ENCODE measurements at regions of chr7 and their contacts with region 1.

Region 1: GRCh38 chr7:118898284-118898683 is 673.8 kb downstream of the ANKRD7 start:
- DNase-seq: no peak
- ATAC-seq: no peak

Region 2: GRCh38 chr7:118844748-118845147 is 53.5 kb before region 1 on chr7:
- intact Hi-C with region 1: loop called in 1 of 2 experiments (anchors 5 kb)
- DNase-seq: no peak
- ATAC-seq: no peak

Region 3: GRCh38 chr7:119037941-119038340 is 139.7 kb after region 1 on chr7:
- intact Hi-C with region 1: no loop called
- DNase-seq: no peak
- ATAC-seq: no peak

Region 4: GRCh38 chr7:120216947-120217346 is 1318.7 kb after region 1 on chr7:
- intact Hi-C with region 1: no loop called
- DNase-seq: no peak
- ATAC-seq: no peak